MCF 10A (cell line): ENCODE measurements at regions of chr1 and their contacts with region 1.

Region 1: DNA sequence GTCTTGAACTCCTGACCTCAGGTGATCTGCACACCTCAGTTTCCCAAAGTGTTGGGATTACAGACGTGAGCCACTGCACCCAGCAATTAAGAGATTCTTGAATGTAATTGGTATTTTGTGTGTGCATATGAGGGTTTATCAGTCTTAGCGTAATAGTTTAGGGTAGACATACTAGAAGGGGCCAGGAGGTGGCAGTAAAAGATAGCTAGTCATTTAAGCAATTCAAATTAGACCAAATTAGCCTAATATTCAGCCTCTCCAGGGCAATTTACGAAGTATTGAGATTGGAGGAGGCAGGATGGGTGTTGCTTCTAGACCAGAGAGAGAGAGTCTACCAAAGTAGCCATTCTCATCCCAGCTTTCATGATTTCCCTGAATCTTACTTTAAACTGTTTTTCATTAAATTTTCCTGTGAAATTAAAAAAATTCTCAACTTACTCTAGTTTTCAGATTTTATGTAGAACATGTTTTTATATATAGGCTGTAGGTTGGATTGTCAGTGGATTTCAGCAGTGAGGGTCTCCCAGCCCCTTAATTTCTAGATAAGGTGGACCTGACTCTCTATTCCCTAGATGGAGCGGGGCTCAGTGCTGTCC is 119.7 kb downstream of the HHAT start:
- DNase-seq: peak; percentile 71
- H3K4me3 Mint-ChIP-seq: no peak overlapping the region
- H3K27ac Mint-ChIP-seq: no peak overlapping the region
- H3K4me1 Mint-ChIP-seq: peaks cover 11% of the 10 kb centered on the region
- H3K27me3 Mint-ChIP-seq: peaks cover 52% of the 10 kb centered on the region
- CTCF ChIP-seq: peak; percentile 93

Region 2: DNA sequence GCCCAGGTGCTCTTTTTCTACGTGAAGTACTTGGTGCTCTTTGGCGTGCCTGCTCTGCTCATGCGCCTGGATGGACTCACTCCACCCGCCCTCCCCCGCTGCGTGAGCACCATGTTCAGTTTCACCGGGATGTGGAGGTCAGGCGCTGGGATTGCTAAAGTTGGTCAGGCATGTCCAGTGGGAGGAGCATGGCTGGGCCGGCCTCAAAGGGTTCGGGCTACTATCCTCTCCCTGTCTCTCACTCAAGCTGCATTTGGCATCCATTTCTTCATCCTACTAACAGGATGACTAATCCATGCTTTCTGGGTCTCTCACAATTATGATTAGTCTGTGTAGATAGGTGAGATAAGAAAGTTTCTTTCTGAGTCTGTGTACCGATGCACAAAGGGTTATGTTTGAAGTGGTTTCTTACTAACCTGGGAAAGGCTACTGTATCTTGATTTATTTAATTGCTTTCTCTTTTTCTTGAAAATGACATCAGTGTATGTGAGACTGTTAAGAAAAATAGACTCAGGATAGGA is 16.2 kb after region 1 on chr1:
- CTCF ChIA-PET with region 1: interaction called, 87 read pairs
- POLR2A ChIA-PET with region 1: interaction called, 3 read pairs
- intact Hi-C with region 1: no loop called
- DNase-seq: peak; percentile 63
- H3K4me3 Mint-ChIP-seq: no peak overlapping the region
- H3K27ac Mint-ChIP-seq: no peak overlapping the region
- H3K4me1 Mint-ChIP-seq: peaks cover 6% of the 10 kb centered on the region
- H3K27me3 Mint-ChIP-seq: no peaks in the 10 kb centered on the region
- CTCF ChIP-seq: no peak

Region 3: GRCh38 chr1:210739627-210740026 is 291.2 kb after region 1 on chr1:
- CTCF ChIA-PET with region 1: interaction called, 5 read pairs
- POLR2A ChIA-PET with region 1: no interaction called
- intact Hi-C with region 1: loop called (anchors 10 kb)
- DNase-seq: peak; percentile 37
- H3K4me3 Mint-ChIP-seq: no peak overlapping the region
- H3K27ac Mint-ChIP-seq: no peak overlapping the region
- H3K4me1 Mint-ChIP-seq: no peaks in the 10 kb centered on the region
- H3K27me3 Mint-ChIP-seq: peaks cover 50% of the 10 kb centered on the region
- CTCF ChIP-seq: no peak

Region 4: DNA sequence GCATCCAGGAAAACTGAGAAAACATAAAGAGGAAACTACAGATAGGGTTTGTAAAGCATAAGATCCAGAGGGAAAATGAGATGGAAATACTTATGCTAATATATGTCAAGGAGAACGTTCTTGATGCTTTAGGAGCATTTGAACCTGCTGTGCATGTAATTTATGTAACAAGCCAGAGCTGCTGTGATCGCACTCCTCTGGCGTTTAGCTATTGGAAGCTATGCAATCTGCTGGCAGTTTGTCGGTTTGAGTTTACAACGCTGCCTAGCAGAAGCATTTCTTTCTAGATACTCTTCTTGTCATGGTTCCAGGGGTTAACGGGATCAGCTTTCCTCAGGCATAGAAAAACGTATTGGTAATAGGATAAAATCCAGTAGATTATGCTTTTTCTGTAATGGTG is 502.9 kb after region 1 on chr1:
- CTCF ChIA-PET with region 1: interaction called, 13 read pairs
- POLR2A ChIA-PET with region 1: no interaction called
- intact Hi-C with region 1: no loop called
- DNase-seq: no peak
- H3K4me3 Mint-ChIP-seq: no peak overlapping the region
- H3K27ac Mint-ChIP-seq: no peak overlapping the region
- H3K4me1 Mint-ChIP-seq: no peaks in the 10 kb centered on the region
- H3K27me3 Mint-ChIP-seq: no peaks in the 10 kb centered on the region
- CTCF ChIP-seq: no peak

Region 5: GRCh38 chr1:211258756-211259637 is 810.6 kb after region 1 on chr1 and contains the start of gene RCOR3:
- CTCF ChIA-PET with region 1: interaction called, 4 read pairs
- POLR2A ChIA-PET with region 1: no interaction called
- intact Hi-C with region 1: loop called (anchors 5 kb)
- DNase-seq: peak; percentile 96
- H3K4me3 Mint-ChIP-seq: peak within 1 kb of the TSS; percentile 88
- H3K27ac Mint-ChIP-seq: peak within 1 kb of the TSS; percentile 96
- H3K4me1 Mint-ChIP-seq: peaks cover 24% of the 10 kb centered on the region
- H3K27me3 Mint-ChIP-seq: no peaks in the 10 kb centered on the region
- CTCF ChIP-seq: peak; percentile 93
- total RNA-seq, gene RCOR3: 70.1 and 70.3 TPM in 2 replicates